CD4-positive, alpha-beta T cell (primary cell): ENCODE measurements at regions of chr2 and their contacts with region 1.

Region 1: DNA sequence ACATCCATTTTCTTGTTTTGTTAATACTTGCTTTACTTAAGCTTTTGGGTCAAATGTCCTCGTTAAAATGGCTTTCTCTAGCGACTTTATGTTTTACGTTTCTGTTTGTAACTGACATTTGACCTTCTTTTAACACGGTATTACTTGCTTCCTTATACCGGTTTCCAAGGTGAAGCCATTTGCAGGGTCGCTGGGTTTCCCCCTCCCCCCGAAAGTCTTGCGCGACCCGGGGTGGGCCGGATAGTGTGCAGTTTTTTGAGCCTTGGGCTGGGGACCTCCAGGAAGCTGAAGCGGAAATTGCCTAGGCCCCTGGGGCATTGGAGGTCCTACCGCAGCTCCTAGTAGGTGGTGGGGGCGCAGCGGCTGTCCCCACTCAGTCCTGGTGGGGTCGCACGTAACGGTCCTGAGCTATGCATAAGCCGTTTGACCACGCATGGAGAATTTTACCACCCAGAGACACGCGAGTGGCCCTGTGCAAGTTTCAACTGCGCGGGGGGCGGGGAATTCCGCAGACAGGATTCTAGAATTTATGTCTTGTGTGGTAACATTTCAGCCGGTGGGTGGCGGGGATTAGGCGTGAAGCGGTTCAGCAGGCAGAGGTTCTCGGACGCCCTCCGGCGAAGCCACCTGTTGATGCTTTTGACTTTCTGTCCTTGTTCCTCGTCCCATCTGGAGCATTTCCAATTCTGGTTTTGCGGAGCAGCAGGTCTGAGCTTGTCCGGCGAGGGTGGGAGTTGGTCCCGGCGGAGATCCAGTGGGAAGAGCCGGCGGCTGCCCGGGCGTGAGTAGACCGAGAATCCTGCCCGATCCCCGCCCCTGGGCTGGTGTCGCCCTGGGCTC is 2.4 kb downstream of the CFLAR start:
- DNase-seq: peak; percentile 80 to 93 (median 86)
- ATAC-seq: peak; percentile 46
- H3K4me3 ChIP-seq: peak overlapping the region; percentile 84
- H3K4me3 Mint-ChIP-seq: peak overlapping the region; percentile 88
- H3K27ac ChIP-seq: peak overlapping the region; percentile 78 to 98
- H3K27ac Mint-ChIP-seq: peak overlapping the region; percentile 93
- H3K4me1 ChIP-seq: peaks cover 40% of the 10 kb centered on the region
- H3K4me1 Mint-ChIP-seq: peaks cover 67% of the 10 kb centered on the region
- H3K27me3 ChIP-seq: no peaks in the 10 kb centered on the region
- H3K27me3 Mint-ChIP-seq: no peaks in the 10 kb centered on the region
- CTCF ChIP-seq: peak; percentile 67

Region 2: GRCh38 chr2:200864176-200864976 is 254.0 kb before region 1 on chr2 and contains the start of gene CLK1:
- CTCF ChIA-PET with region 1: no interaction called
- POLR2A ChIA-PET with region 1: interaction called, 103 read pairs
- intact Hi-C with region 1: no loop called
- DNase-seq: peak; percentile 95 to 98 (median 97)
- ATAC-seq: peak; percentile 75
- H3K4me3 ChIP-seq: peak within 1 kb of the TSS; percentile 96
- H3K4me3 Mint-ChIP-seq: peak within 1 kb of the TSS; percentile 97
- H3K27ac ChIP-seq: peak within 1 kb of the TSS; percentile 100
- H3K27ac Mint-ChIP-seq: peak within 1 kb of the TSS; percentile 88
- H3K4me1 ChIP-seq: peaks cover 26% of the 10 kb centered on the region
- H3K4me1 Mint-ChIP-seq: peaks cover 48% of the 10 kb centered on the region
- H3K27me3 ChIP-seq: no peaks in the 10 kb centered on the region
- H3K27me3 Mint-ChIP-seq: peaks cover 4% of the 10 kb centered on the region
- CTCF ChIP-seq: no peak
- total RNA-seq, gene CLK1: 1,228 to 1,235 TPM

Region 3: DNA sequence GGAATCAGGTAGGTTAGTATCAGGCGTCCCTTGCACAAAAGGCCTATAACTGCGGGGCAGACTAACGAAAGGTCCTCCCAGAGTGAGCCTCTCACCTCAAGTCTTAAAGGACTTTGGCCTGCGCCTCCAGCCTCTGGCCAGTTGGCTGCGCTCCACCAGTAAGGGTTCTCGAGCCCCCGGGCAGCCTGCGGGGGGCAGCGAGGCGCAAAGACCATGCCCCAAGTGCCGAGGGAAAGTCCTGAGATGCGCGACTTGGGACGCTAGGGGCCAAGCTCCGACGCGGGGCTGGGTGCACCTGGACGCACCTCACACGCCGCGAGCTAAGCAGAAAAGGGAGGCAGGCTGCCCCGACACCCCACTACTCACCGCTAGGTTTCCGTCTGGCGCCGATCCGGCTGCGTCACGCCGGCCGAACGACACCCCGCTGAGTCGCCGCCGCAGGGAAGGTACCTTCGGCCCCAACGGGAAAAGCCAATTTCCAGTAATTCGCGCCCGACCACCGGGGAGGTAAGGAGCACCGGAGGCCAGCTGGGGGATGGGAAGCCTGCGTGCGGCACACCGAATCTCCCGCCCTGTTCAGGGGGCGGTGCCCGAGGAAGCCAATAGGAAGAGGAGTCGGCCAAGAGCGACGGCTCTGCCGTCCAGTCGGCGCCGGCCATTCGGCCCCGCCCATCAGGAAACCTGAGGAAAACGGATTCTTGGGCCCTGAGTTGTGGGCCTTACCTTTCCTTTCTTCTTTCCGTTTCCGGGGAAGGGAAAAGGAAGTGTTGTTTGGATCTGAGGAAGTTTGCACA is 155.0 kb before region 1 on chr2 and contains the start of gene ORC2:
- CTCF ChIA-PET with region 1: no interaction called
- POLR2A ChIA-PET with region 1: interaction called, 55 read pairs
- intact Hi-C with region 1: no loop called
- DNase-seq: peak; percentile 87 to 96 (median 90)
- ATAC-seq: peak; percentile 95
- H3K4me3 ChIP-seq: peak within 1 kb of the TSS; percentile 98
- H3K4me3 Mint-ChIP-seq: peak within 1 kb of the TSS; percentile 99
- H3K27ac ChIP-seq: peak within 1 kb of the TSS; percentile 89 to 92
- H3K27ac Mint-ChIP-seq: peak within 1 kb of the TSS; percentile 100
- H3K4me1 ChIP-seq: peaks cover 25% of the 10 kb centered on the region
- H3K4me1 Mint-ChIP-seq: peaks cover 73% of the 10 kb centered on the region
- H3K27me3 ChIP-seq: no peaks in the 10 kb centered on the region
- H3K27me3 Mint-ChIP-seq: no peaks in the 10 kb centered on the region
- CTCF ChIP-seq: peak; percentile 74
- total RNA-seq, gene ORC2: 25.0 to 26.6 TPM

Region 4: DNA sequence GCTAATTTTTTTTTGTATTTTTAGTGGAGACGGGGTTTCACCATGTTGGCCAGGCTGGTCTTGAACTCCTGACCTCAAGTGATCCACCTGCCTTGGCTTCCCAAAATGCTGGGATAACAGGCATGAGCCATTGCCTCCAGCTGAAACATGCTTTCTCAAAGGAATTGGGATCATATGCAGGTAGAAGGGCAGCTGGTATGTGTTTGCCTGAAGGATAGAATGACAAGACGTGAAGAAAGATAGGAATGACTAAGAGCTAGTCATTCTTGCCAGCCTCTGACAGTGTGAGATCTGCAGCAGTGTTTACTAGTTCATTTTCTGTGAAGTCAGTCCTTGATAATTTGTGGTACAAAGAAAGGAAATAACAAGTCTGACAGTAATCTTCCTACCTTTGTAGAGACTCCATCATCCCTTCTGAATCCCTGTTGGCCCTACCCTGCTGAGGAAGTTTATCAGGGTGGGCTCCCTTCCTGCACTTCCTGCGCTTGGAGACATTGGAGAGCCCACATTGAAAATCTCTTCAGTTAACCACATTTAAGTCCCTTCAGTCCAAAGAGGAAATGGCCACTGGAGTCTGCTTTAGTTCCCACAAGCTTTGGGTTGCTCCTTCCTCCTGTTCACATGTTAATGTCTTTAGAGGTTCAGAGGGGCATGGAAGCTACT is 12.3 kb after region 1 on chr2:
- CTCF ChIA-PET with region 1: interaction called, 36 read pairs
- POLR2A ChIA-PET with region 1: interaction called, 6 read pairs
- intact Hi-C with region 1: loop called in 1 of 2 experiments (anchors 1 kb)
- DNase-seq: peak in 7 of 14 experiments; percentile 25 to 75 (median 48)
- ATAC-seq: peak; percentile 71
- H3K4me3 ChIP-seq: peak overlapping the region; percentile 25
- H3K4me3 Mint-ChIP-seq: peak overlapping the region; percentile 46
- H3K27ac ChIP-seq: peak overlapping the region; percentile 67 to 69
- H3K27ac Mint-ChIP-seq: peak overlapping the region; percentile 96
- H3K4me1 ChIP-seq: peaks cover 80% of the 10 kb centered on the region
- H3K4me1 Mint-ChIP-seq: peaks cover 78% of the 10 kb centered on the region
- H3K27me3 ChIP-seq: no peaks in the 10 kb centered on the region
- H3K27me3 Mint-ChIP-seq: no peaks in the 10 kb centered on the region
- CTCF ChIP-seq: no peak

Region 5: GRCh38 chr2:201151127-201151981 is 33.0 kb after region 1 on chr2:
- CTCF ChIA-PET with region 1: interaction called, 11 read pairs
- POLR2A ChIA-PET with region 1: interaction called, 19 read pairs
- intact Hi-C with region 1: no loop called
- DNase-seq: peak in 3 of 14 experiments; percentile 33 to 44 (median 41)
- ATAC-seq: no peak
- H3K4me3 ChIP-seq: no peak overlapping the region
- H3K4me3 Mint-ChIP-seq: no peak overlapping the region
- H3K27ac ChIP-seq: peak overlapping the region; percentile 13 to 68
- H3K27ac Mint-ChIP-seq: peak overlapping the region; percentile 87
- H3K4me1 ChIP-seq: peaks cover 19% of the 10 kb centered on the region
- H3K4me1 Mint-ChIP-seq: peaks cover 38% of the 10 kb centered on the region
- H3K27me3 ChIP-seq: no peaks in the 10 kb centered on the region
- H3K27me3 Mint-ChIP-seq: no peaks in the 10 kb centered on the region
- CTCF ChIP-seq: no peak

Region 6: DNA sequence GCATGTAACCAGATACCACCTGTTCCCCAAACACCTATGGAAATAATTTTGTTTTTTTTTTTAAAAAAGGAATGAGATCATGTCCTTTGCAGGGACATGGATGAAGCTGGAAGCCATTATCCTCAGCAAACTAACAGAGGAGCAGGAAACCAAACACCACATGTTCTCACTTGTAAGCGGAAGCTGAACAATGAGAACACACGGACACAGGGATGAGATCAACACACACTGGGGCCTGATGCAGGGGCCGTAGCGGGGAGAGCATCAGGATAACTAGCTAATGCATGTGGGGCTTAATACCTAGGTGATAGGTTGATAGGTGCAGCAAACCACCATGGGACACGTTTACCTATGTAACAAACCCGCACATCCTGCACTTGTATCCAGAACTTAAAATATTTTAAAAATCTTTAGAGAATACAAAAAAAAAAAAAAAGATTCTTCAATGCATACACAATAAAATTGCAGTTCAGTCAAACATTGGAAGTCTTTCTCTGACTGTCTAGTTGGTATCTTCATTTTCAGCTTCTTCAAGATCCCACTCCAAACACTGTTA is 53.0 kb after region 1 on chr2:
- CTCF ChIA-PET with region 1: interaction called, 3 read pairs
- POLR2A ChIA-PET with region 1: interaction called, 3 read pairs
- intact Hi-C with region 1: loop called in 1 of 2 experiments (anchors 5 kb)
- DNase-seq: no peak
- ATAC-seq: no peak
- H3K4me3 ChIP-seq: no peak overlapping the region
- H3K4me3 Mint-ChIP-seq: no peak overlapping the region
- H3K27ac ChIP-seq: no peak overlapping the region
- H3K27ac Mint-ChIP-seq: peak overlapping the region; percentile 51
- H3K4me1 ChIP-seq: no peaks in the 10 kb centered on the region
- H3K4me1 Mint-ChIP-seq: no peaks in the 10 kb centered on the region
- H3K27me3 ChIP-seq: no peaks in the 10 kb centered on the region
- H3K27me3 Mint-ChIP-seq: no peaks in the 10 kb centered on the region
- CTCF ChIP-seq: no peak

Region 7: GRCh38 chr2:201194097-201194496 is 75.8 kb after region 1 on chr2:
- CTCF ChIA-PET with region 1: no interaction called
- POLR2A ChIA-PET with region 1: interaction called, 10 read pairs
- intact Hi-C with region 1: no loop called
- DNase-seq: peak in 3 of 14 experiments; percentile 37 to 72 (median 42)
- ATAC-seq: peak; percentile 68
- H3K4me3 ChIP-seq: no peak overlapping the region
- H3K4me3 Mint-ChIP-seq: peak overlapping the region; percentile 68
- H3K27ac ChIP-seq: peak overlapping the region; percentile 51 to 65
- H3K27ac Mint-ChIP-seq: peak overlapping the region; percentile 91
- H3K4me1 ChIP-seq: peaks cover 60% of the 10 kb centered on the region
- H3K4me1 Mint-ChIP-seq: peaks cover 78% of the 10 kb centered on the region
- H3K27me3 ChIP-seq: no peaks in the 10 kb centered on the region
- H3K27me3 Mint-ChIP-seq: no peaks in the 10 kb centered on the region
- CTCF ChIP-seq: no peak